Endothelial cell of umbilical vein (primary cell): ENCODE measurements at regions of chr16 and their contacts with region 1.

Region 1: DNA sequence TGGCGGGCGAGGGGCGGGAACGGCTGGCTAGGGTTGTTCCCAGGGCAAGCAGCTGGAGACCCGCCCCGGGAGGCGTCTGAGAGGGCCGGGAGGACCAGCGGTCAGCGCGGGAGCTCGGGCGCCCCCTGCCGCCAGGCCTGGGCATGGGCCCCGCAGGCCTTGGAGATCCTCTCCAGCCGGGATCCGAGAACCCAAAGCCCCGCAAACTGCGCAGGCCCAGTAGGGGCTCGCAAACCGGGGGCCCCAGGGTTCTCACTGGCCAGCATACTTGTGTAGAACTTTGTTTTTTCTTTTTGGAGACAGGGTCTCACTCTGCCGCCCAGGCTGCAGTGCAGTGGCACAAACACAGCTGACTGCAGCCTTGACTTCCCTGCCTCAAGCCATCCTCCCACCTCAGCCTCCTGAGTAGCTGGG is 20.8 kb upstream of the ZNF423 start:
- DNase-seq: peak; percentile 25
- H3K4me3 ChIP-seq: no peak overlapping the region
- H3K27ac ChIP-seq: no peak overlapping the region
- H3K4me1 ChIP-seq: no peaks in the 10 kb centered on the region
- H3K27me3 ChIP-seq: peaks cover 4 to 8% of the 10 kb centered on the region in 2 experiments
- CTCF ChIP-seq: peak; percentile 88 to 94
- POLR2A ChIP-seq: no peak

Region 2: GRCh38 chr16:49491771-49492761 is 384.7 kb before region 1 on chr16:
- CTCF ChIA-PET with region 1: interaction called, 21 read pairs
- POLR2A ChIA-PET with region 1: no interaction called
- dilution Hi-C with region 1: no loop called
- intact Hi-C with region 1: loop called (anchors 1 kb)
- DNase-seq: peak; percentile 34
- H3K4me3 ChIP-seq: peak overlapping the region in 1 of 3 experiments; percentile 13
- H3K27ac ChIP-seq: no peak overlapping the region
- H3K4me1 ChIP-seq: no peaks in the 10 kb centered on the region
- H3K27me3 ChIP-seq: no peaks in the 10 kb centered on the region
- CTCF ChIP-seq: peak; percentile 81 to 96
- POLR2A ChIP-seq: no peak

Region 3: DNA sequence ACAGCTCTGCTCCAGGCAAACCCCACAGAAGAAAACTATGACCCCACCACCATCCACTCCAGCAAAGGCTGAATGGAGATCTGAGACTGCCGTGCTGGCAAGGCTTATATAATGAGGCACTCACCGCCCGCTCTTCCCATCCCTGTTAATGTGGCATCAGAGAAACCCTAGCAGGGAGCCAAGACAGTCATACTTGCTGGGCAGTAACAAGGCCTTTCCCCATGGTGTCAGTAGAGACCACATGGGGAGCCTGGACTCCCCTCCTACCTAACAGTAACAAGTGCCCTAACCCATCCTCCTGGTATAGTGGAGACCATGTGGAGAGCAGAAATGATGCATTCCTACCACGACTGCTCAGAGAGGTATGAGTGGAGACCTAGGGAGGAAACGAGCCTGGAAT is 267.9 kb before region 1 on chr16:
- CTCF ChIA-PET with region 1: interaction called, 5 read pairs
- POLR2A ChIA-PET with region 1: no interaction called
- dilution Hi-C with region 1: no loop called
- intact Hi-C with region 1: loop called (anchors 2 kb)
- DNase-seq: peak; percentile 38
- H3K4me3 ChIP-seq: no peak overlapping the region
- H3K27ac ChIP-seq: no peak overlapping the region
- H3K4me1 ChIP-seq: peaks cover 10% of the 10 kb centered on the region
- H3K27me3 ChIP-seq: no peaks in the 10 kb centered on the region
- CTCF ChIP-seq: peak; percentile 25 to 49
- POLR2A ChIP-seq: no peak

Region 4: DNA sequence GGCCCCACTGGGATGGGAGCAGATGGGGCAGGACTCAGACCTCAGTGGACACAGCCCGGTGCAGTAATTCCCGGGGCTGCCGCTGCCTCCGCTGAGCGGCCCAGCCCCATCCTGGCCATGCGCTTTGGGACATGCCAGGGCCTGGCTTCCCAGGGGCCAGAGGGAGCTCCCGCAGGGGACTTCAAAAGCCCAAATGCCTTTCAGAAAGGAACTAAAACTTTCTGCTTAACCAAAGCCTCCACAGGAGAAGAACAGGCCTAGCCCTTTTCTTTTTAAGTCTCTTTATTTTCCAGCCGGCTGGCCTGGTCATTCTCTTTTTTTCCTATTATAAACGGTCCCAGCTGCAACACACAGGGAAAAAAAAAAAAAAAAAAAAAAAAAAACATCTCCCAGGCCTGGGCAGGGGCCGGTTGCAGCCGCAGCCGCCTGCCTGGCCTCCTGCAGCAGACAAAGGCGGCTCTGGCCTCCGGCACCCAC is 10.1 kb before region 1 on chr16:
- CTCF ChIA-PET with region 1: interaction called, 21 read pairs
- POLR2A ChIA-PET with region 1: no interaction called
- dilution Hi-C with region 1: no loop called
- intact Hi-C with region 1: no loop called
- DNase-seq: no peak
- H3K4me3 ChIP-seq: no peak overlapping the region
- H3K27ac ChIP-seq: no peak overlapping the region
- H3K4me1 ChIP-seq: no peaks in the 10 kb centered on the region
- H3K27me3 ChIP-seq: peaks cover 13 to 16% of the 10 kb centered on the region in 2 experiments
- CTCF ChIP-seq: no peak
- POLR2A ChIP-seq: no peak

Region 5: GRCh38 chr16:49921791-49922456 is 45.2 kb after region 1 on chr16:
- CTCF ChIA-PET with region 1: interaction called, 5 read pairs
- POLR2A ChIA-PET with region 1: no interaction called
- dilution Hi-C with region 1: no loop called
- intact Hi-C with region 1: loop called (anchors 5 kb)
- DNase-seq: peak; percentile 52
- H3K4me3 ChIP-seq: no peak overlapping the region
- H3K27ac ChIP-seq: no peak overlapping the region
- H3K4me1 ChIP-seq: no peaks in the 10 kb centered on the region
- H3K27me3 ChIP-seq: no peaks in the 10 kb centered on the region
- CTCF ChIP-seq: peak; percentile 46 to 72
- POLR2A ChIP-seq: no peak

Region 6: GRCh38 chr16:49937886-49938285 is 61.2 kb after region 1 on chr16:
- CTCF ChIA-PET with region 1: no interaction called
- POLR2A ChIA-PET with region 1: no interaction called
- dilution Hi-C with region 1: no loop called
- intact Hi-C with region 1: no loop called
- DNase-seq: no peak
- H3K4me3 ChIP-seq: no peak overlapping the region
- H3K27ac ChIP-seq: no peak overlapping the region
- H3K4me1 ChIP-seq: no peaks in the 10 kb centered on the region
- H3K27me3 ChIP-seq: no peaks in the 10 kb centered on the region
- CTCF ChIP-seq: no peak
- POLR2A ChIP-seq: no peak

Region 7: GRCh38 chr16:49980166-49980565 is 103.4 kb after region 1 on chr16:
- CTCF ChIA-PET with region 1: no interaction called
- POLR2A ChIA-PET with region 1: no interaction called
- dilution Hi-C with region 1: no loop called
- intact Hi-C with region 1: no loop called
- DNase-seq: no peak
- H3K4me3 ChIP-seq: no peak overlapping the region
- H3K27ac ChIP-seq: no peak overlapping the region
- H3K4me1 ChIP-seq: no peaks in the 10 kb centered on the region
- H3K27me3 ChIP-seq: no peaks in the 10 kb centered on the region
- CTCF ChIP-seq: no peak
- POLR2A ChIP-seq: no peak

Region 8: GRCh38 chr16:50079397-50080140 is 202.8 kb after region 1 on chr16:
- CTCF ChIA-PET with region 1: no interaction called
- POLR2A ChIA-PET with region 1: no interaction called
- dilution Hi-C with region 1: no loop called
- intact Hi-C with region 1: no loop called
- DNase-seq: no peak
- H3K4me3 ChIP-seq: no peak overlapping the region
- H3K27ac ChIP-seq: no peak overlapping the region
- H3K4me1 ChIP-seq: peaks cover 7% of the 10 kb centered on the region
- H3K27me3 ChIP-seq: no peaks in the 10 kb centered on the region
- CTCF ChIP-seq: no peak
- POLR2A ChIP-seq: no peak